Panc1 (cell line): ENCODE measurements at regions of chr10 and their contacts with region 1.

Region 1: GRCh38 chr10:14801723-14802122 is 27.0 kb upstream of the FAM107B start:
- DNase-seq: no peak
- ATAC-seq: no peak
- H3K4me3 ChIP-seq: no peak overlapping the region
- H3K27ac ChIP-seq: no peak overlapping the region
- H3K4me1 ChIP-seq: no peaks in the 10 kb centered on the region
- H3K27me3 ChIP-seq: no peaks in the 10 kb centered on the region
- CTCF ChIP-seq: no peak

Region 2: GRCh38 chr10:14782691-14783363 is 18.9 kb before region 1 on chr10:
- CTCF ChIA-PET with region 1: no interaction called
- POLR2A ChIA-PET with region 1: interaction called, 14 read pairs
- in situ Hi-C with region 1: no loop called
- intact Hi-C with region 1: no loop called
- DNase-seq: peak; percentile 46
- ATAC-seq: peak; percentile 84
- H3K4me3 ChIP-seq: no peak overlapping the region
- H3K27ac ChIP-seq: no peak overlapping the region
- H3K4me1 ChIP-seq: no peaks in the 10 kb centered on the region
- H3K27me3 ChIP-seq: no peaks in the 10 kb centered on the region; the same call in 1 of the 2 replicates
- CTCF ChIP-seq: no peak